Panc1 (cell line): ENCODE measurements at regions of chr10 and their contacts with region 1.

Region 1: DNA sequence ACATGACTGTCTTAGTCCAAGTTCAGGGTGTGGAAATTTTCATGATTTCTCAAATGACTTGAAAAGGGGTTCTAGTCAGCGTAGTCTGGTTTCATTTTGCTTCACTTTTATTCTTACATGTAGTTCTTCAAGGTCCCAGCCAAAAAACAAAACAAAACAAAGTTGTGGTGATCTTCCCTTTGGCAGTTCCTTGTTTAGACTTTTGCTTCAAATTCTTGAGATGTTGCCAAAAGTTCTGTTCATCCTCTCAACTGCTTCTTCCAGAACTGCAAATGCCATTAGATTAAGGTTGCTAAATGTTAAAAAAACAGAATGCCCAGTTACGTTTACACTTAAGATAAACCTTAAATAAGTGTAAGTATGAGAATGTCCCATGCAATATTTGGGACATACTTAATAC is 370.8 kb upstream of the LRRTM3 start:
- DNase-seq: no peak
- ATAC-seq: no peak
- H3K4me3 ChIP-seq: no peak overlapping the region
- H3K27ac ChIP-seq: no peak overlapping the region
- H3K4me1 ChIP-seq: no peaks in the 10 kb centered on the region
- H3K27me3 ChIP-seq: no peaks in the 10 kb centered on the region
- CTCF ChIP-seq: no peak

Region 2: DNA sequence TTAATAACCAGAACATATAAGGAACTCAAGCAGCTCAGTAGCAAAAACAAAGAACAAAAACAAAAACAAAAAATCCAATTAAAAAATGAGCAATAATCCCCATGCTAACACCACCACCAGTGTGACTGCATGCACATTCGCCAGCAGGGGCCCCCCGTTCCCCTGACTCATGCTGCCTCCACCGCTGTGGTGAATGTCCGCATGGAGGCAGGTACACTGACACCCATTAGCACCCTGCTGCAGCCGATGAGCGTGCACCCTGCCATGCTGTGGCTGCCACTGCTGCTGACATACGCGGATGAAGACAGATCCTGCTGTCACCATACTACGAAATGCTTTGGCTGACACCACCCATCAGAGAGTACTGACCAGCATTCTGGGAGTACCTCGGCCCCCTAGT is 49.1 kb after region 1 on chr10:
- CTCF ChIA-PET with region 1: no interaction called
- POLR2A ChIA-PET with region 1: interaction called, 16 read pairs
- in situ Hi-C with region 1: no loop called
- intact Hi-C with region 1: no loop called
- DNase-seq: no peak
- ATAC-seq: no peak
- H3K4me3 ChIP-seq: no peak overlapping the region
- H3K27ac ChIP-seq: no peak overlapping the region
- H3K4me1 ChIP-seq: no peaks in the 10 kb centered on the region
- H3K27me3 ChIP-seq: no peaks in the 10 kb centered on the region
- CTCF ChIP-seq: no peak